ENCODE measurements at regions of chr6 and their contacts with region 1.

Region 1: DNA sequence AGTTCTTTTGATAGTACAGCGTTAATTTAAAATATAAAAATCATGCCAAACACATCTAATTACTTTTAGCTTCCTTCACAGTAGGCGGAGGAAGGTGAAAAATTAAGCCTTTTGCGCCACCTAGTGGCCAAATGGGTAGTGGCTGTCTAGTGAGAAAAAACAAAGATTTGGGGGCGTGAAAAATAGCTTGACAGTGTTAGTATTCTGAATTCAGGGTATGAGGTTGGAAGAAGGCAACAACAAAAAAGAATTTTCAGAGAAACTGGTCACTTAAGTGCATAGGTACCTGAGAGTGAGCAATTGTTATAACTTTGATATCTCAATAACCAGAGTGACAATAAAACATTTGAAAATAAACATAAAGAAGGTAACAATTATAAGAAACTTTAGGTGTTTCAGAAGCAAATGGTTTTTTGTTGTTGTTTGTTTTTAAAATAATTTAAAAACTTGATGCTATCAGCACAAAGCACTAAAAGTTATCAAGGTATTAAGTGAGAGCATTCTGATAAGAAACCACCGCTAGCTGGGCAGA is 14.3 kb downstream of the PSMB9 start:
- DNase-seq: peak in 2 of 3 donors; percentile 80 to 94
- ATAC-seq: peak; percentile 86
- H3K4me3 ChIP-seq: no peak overlapping the region
- H3K4me1 ChIP-seq: no peaks in the 10 kb centered on the region
- CTCF ChIP-seq: peak; percentile 58

Region 2: GRCh38 chr6:32825966-32826365 is 42.4 kb before region 1 on chr6:
- intact Hi-C with region 1: loop called in 1 of 2 experiments (anchors 5 kb)
- DNase-seq: no peak
- ATAC-seq: peak; percentile 80
- H3K4me3 ChIP-seq: no peak overlapping the region
- H3K4me1 ChIP-seq: no peaks in the 10 kb centered on the region
- CTCF ChIP-seq: no peak

Region 3: GRCh38 chr6:32838114-32838958 is 30.0 kb before region 1 on chr6 and contains the start of gene TAP2:
- intact Hi-C with region 1: loop called in 1 of 2 experiments (anchors 2 kb)
- DNase-seq: peak; percentile 97 to 99 (median 99)
- ATAC-seq: peak; percentile 96
- H3K4me3 ChIP-seq: peak within 1 kb of the TSS; percentile 42
- H3K4me1 ChIP-seq: peaks cover 24% of the 10 kb centered on the region
- CTCF ChIP-seq: peak; percentile 97
- total RNA-seq, gene TAP2: 47.4 to 179 (median 52.7) TPM

Measured in mucosa of descending colon (tissue), 3 donors.